ENCODE measurements at regions of chr17 and their contacts with region 1.

Region 1: DNA sequence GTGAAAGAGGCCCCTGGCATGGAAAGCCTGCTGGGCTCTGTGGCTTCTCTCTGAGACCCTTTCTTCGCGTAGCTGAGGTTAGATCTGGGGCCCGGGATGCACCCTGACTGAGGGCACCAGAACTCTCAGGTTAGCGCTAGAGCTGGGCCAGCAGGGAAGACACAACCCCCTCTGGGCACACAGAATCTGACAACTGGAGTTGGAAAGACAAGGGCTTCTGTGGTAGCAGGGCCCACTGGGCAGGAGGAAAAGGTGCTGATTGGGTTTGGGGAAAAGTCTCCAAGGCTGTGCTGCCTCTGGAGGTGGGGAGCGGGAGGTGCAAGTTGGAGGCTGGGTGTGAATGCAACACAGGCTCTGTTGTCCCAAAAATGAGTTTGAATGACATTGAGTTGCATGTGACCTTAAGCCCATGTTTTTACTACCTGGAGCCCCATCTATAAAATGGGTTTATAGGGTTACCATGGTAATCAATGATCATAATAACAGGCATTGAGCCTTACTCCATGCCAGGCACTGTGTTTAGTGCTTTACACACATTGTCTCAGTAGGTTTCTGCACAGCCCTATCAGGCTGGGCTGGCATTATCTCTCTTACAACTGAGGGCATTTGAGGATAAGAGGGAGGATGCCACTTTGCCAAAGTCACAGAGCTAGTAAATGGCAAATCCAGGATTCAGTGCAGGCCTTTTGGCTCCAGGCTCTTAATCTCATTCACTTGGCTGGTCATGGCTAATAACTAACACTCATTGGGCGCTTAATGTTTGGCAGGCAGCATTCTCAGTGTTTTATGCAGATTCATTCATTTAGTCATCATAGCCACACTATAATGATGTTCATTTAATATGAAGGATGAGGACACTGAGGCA is 9.5 kb upstream of the IGFBP4 start:
- DNase-seq: no peak
- ATAC-seq: peak; percentile 67

Region 2: DNA sequence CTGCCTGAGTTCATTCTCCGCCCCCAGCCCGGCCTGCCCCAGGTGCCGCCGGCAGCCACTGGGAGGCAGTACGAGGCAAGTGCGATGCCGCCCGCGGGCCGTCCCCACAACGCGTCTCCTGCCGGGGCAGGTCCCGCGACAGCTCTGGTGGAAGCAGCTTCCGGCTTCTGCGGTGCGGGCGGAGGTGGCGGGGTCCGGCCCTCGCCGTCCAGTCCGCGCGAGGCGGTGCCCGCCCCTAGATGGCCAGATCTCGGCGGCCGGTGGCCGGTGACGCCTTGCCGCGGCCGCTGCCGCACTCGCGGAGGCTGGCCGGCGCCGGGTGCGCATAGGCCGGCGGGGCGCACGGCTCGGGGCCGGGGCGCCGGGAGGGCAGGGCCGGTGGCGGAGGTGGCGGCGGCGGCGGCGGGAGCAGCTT is 71.1 kb before region 1 on chr17:
- intact Hi-C with region 1: no loop called
- DNase-seq: peak; percentile 79 to 86
- ATAC-seq: peak; percentile 85

Region 3: GRCh38 chr17:40480501-40481003 is 46.8 kb after region 1 on chr17:
- intact Hi-C with region 1: loop called in 1 of 2 experiments (anchors 5 kb)
- DNase-seq: peak; percentile 63 to 66
- ATAC-seq: peak; percentile 69

Region 4: DNA sequence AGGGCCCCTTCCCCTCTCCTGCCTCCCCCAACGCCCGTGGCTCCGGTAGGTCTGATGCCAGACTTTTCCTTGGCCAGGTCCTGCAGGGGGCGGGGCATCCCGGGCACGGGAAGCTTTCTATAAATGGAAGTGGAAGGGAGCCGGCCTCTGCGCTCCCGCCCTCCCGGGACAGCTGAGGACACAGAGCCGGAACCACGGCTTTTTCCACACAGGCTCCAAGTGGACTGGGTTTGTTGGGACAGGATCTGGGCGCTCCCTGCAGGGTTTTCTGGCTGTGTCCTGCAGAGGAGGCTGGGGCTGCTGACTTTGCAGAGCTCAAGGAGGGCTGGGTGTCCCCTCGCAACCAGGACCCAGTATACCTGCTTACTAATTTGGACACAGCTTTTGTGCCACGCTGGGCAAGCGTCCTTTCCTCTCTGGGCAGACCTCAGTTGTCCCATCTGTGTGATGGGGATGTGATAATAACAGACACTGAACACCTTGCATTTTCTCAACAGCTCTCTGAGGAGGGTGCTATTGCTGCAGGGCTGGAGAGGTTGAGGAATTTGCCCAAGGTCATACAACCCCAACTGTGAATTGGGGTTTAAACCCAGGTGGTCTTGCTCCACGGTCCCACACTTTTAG is 65.9 kb after region 1 on chr17:
- intact Hi-C with region 1: no loop called
- DNase-seq: peak; percentile 94 to 95
- ATAC-seq: peak; percentile 80

Region 5: DNA sequence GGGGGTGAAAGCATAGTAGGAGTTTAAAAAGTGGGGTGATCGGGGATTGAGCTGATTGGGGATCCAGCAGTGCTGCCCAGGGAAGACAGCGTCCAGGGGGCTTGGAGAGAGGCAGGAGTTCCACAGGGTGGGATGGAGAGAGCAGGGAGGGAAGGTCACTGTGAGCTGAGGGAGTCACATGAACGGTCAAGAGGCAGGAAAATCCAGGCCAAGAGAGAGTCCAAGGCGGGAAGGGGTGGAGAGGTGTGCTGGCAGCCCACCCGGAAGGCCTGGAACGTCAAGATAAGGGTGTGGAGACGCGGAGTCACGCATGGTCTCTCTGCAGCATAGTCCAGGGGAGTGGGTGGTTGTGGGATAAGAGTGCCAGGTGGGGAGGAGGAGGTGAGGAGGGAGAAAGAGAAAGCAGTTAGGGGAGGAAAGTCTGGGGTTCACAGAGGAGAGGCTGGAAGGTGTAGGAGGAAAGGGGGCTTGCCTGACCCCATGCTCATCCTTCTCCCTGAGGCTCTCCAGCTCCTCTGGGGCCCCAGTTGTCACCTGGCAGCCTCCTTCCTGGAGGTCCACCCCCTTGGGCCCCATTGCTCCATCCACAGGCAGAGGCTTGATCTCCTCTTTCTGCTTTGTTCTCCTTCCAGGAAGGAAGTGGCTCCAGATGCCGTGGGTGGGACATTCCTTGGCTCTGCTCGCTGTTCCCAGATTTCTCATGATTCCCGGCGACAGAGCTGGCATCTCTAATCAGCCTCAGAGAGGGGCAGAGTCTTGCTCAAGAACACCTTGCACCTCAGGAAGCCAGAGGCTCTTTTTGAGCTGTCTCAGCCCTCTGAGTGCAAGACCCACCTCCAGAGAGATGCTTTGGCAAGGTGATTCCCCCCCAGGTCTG is 102.8 kb after region 1 on chr17:
- intact Hi-C with region 1: loop called in 1 of 2 experiments (anchors 10 kb)
- DNase-seq: peak in 1 of 2 donors; percentile 35
- ATAC-seq: no peak

Measured in left colon (tissue), 2 donors.